GM10248 (cell line): ENCODE measurements at regions of chr2 and their contacts with region 1.

Region 1: GRCh38 chr2:158179660-158180059 is 78.0 kb downstream of the UPP2 start:
- DNase-seq: no peak
- CTCF ChIP-seq: peak; percentile 40

Region 2: DNA sequence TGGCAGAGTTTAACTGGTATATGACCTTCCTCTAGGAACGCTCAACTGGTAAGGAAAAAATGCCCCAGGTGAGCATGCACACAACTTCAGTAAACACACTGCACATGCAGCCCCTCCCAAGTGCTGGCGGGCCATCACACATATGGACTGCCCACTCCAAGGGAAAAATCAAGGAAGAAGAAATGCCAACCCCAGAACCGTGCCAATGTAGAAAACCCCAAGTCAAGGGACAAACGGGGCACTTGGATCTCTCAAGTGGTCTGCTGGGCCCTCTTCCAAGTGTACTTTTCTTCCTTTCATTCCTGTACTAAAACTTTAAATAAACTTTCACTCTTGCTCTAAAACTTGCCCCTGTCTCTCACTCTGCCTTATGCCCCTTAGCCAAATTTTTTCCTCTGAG is 227.1 kb before region 1 on chr2:
- CTCF ChIA-PET with region 1: no interaction called
- POLR2A ChIA-PET with region 1: no interaction called
- DNase-seq: no peak
- CTCF ChIP-seq: no peak

Region 3: DNA sequence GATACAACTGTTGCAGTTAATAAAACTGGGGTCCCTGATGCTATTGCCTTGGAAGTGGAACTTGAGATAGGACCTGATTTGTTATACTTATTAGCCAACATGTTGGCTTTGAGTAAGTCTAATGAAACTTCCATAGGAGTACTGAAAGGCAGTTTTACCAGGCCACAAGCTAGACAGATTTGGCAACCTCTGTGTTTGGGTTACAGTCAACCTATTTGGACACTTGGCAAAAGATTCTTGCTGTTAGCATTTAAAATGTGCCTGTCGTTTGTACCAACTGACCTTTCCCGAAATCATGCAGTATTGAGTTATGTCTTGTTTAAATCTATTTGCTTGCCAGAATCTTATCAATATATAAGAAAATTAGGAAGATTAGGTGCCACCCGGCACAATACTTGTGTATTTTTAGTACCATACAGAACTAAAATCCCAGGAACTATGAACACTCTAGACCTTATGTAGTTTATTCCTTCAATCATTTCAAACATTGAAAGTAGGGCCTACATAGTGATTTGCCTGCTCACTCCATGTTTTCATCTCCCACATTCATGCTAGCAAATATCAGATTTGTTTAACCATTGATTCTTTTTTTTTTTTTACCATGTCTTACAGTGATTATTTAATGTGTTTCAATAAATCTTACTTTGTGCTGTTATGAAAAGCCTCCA is 113.5 kb before region 1 on chr2:
- CTCF ChIA-PET with region 1: no interaction called
- POLR2A ChIA-PET with region 1: no interaction called
- DNase-seq: no peak
- CTCF ChIP-seq: no peak

Region 4: DNA sequence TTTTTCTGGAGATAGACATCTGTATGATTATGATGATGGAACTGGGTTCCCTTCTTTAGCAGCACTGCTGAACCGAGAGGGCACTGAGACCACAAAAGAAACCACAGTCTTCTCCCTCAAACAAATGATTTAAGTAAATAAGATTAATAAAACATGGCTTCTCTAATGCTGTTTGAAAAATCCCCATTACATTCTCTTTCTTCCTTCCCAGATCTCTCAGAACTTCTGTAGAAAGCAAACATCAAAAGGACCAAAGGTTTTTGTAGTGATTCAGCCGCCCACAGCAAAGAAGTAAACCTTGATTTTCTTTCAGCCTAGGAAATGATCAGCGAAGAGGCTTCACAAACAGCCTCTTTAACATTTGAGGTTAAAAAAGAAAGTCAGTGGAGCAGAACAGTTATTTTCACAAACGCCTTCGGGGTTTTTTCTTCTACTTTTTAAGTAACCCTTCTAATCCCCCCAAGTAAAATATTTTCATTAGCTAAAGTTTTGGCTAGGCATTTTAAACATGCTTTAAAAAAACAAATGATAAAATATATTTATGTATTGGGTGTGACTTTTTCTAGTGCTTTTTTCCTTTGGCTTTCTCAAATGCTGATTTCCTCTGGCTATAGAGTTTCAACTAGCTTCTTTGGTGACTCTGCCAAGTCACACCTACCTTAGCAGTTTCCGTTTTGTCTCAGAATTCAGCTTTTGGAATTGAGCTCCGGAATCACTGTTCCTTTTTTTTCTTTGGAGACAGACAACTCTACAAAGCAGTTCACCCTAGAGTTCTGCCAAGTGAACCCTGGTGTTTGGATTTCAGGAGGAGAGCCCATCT is 11.6 kb after region 1 on chr2:
- CTCF ChIA-PET with region 1: interaction called, 10 read pairs
- POLR2A ChIA-PET with region 1: no interaction called
- DNase-seq: peak; percentile 24
- CTCF ChIP-seq: no peak

Region 5: DNA sequence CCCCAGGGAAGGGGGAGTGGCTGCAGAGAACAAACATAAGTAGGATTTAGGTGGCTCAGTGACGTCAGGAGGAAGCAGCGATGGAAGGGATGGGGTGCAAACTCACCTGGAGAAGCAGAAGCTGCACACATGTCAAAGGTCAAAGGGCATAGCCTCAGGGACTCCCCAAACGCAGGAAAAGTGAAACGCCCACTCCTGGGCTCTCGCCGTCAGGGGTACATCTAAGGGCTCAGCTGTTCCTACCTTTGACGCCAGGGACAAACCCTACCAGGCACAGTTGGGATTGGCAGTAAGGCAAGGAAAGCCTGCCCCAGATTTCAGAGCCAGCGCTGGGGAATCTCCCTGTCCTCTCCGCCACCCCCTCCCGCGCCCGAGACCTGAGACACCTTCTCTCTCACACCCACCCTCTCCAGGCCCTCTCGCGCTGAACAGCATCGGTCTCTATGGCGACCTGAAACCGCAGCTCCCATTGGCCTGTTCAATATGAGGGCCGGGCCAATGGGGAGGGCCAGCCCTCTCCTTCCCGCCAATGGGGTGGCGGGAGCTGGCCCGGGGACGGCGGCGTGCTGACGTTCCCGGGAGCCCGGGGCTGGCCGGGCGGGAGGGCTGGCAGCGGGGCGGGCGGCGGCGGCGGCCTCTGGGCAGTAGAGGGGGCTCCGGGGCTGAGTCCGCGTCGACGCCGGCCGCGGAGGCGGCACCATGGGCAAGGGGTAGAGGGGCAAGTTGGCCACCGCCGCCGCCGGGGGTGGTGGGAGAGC is 276.8 kb after region 1 on chr2 and contains the starts of genes CCDC148 and PKP4:
- CTCF ChIA-PET with region 1: no interaction called
- POLR2A ChIA-PET with region 1: no interaction called
- DNase-seq: peak; percentile 96
- CTCF ChIP-seq: peak; percentile 24

Region 6: GRCh38 chr2:158761621-158762020 is 582.0 kb after region 1 on chr2:
- CTCF ChIA-PET with region 1: no interaction called
- POLR2A ChIA-PET with region 1: no interaction called
- DNase-seq: no peak
- CTCF ChIP-seq: no peak